ENCODE measurements at regions of chr5 and their contacts with region 1.

Region 1: GRCh38 chr5:169583424-169584204 is at the start of gene SPDL1:
- DNase-seq: peak; percentile 93
- ATAC-seq: peak; percentile 95
- H3K4me3 Mint-ChIP-seq: peak within 1 kb of the TSS; percentile 99
- H3K27ac Mint-ChIP-seq: peak within 1 kb of the TSS; percentile 96
- H3K4me1 Mint-ChIP-seq: peaks cover 20% of the 10 kb centered on the region
- H3K27me3 Mint-ChIP-seq: peaks cover 13% of the 10 kb centered on the region
- total RNA-seq, gene SPDL1: 35.0 to 37.4 TPM

Region 2: DNA sequence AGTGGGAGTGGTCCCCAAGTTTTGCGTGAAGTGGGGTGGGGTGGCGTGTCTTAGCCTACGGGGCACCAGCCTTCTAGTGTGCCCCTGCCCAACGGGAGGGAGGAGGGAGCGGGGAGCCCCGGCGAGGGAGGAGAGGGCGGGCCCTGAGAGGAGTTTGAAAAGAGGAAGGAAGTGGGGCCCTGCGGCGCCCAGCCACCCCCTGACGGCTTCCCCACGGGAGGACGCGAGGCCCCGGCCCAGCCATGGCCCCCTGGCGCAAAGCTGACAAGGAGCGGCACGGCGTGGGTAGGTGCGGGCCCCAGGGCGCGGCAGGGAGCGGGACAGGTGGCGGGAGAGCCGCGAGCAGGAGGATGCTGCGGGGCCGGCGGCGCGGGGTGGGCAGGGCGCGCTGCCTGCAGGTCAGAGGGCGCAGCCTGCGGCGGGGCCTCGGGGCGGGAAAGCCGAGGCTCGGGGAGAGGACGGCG is 53.5 kb after region 1 on chr5 and contains the start of gene DOCK2:
- POLR2A ChIA-PET with region 1: interaction called, 39 read pairs
- DNase-seq: peak; percentile 82
- ATAC-seq: peak; percentile 85
- H3K4me3 Mint-ChIP-seq: peak within 1 kb of the TSS; percentile 96
- H3K27ac Mint-ChIP-seq: peak within 1 kb of the TSS; percentile 98
- H3K4me1 Mint-ChIP-seq: peaks cover 32% of the 10 kb centered on the region
- H3K27me3 Mint-ChIP-seq: peaks cover 6% of the 10 kb centered on the region
- total RNA-seq, gene DOCK2: 266 to 275 TPM

Region 3: DNA sequence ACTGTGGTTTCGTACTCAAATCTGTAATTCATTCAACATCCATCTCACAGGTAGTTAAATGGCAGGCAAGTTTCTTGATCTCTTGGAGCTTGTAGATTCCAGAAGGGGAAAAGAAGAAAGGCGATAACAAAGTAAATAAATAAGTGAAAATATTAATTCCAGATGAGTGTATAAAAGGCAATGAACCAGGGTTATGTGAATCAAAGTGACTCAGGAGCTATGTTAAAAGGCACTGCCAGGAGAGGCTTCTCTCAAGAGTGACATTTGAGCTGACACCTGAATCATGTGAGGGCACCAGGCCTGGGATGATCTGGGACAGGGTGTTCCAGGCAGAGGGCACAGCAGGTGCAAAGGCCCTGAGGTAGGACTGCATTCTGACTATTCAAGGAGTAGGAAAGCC is 98.4 kb after region 1 on chr5:
- POLR2A ChIA-PET with region 1: interaction called, 10 read pairs
- DNase-seq: no peak
- ATAC-seq: no peak
- H3K4me3 Mint-ChIP-seq: no peak overlapping the region
- H3K27ac Mint-ChIP-seq: no peak overlapping the region
- H3K4me1 Mint-ChIP-seq: peaks cover 2% of the 10 kb centered on the region
- H3K27me3 Mint-ChIP-seq: no peaks in the 10 kb centered on the region

Measured in activated naive CD8-positive, alpha-beta T cell treated with anti-CD3 and anti-CD28 coated beads, Interleukin-2, amount 10 ng/mL, durations not matched to agents 7 days and 5 days (primary cell).